AG04449 (cell line): ENCODE measurements at regions of chr17 and their contacts with region 1.

Region 1: GRCh38 chr17:78019367-78019975 is 61.0 kb downstream of the TNRC6C start:
- DNase-seq: no peak
- H3K4me3 ChIP-seq: no peak overlapping the region
- CTCF ChIP-seq: no peak

Region 2: GRCh38 chr17:78040440-78041385 is 21.2 kb after region 1 on chr17:
- CTCF ChIA-PET with region 1: interaction called, 130 read pairs
- POLR2A ChIA-PET with region 1: interaction called, 4 read pairs
- DNase-seq: no peak
- H3K4me3 ChIP-seq: peak overlapping the region; percentile 65
- CTCF ChIP-seq: no peak

Region 3: DNA sequence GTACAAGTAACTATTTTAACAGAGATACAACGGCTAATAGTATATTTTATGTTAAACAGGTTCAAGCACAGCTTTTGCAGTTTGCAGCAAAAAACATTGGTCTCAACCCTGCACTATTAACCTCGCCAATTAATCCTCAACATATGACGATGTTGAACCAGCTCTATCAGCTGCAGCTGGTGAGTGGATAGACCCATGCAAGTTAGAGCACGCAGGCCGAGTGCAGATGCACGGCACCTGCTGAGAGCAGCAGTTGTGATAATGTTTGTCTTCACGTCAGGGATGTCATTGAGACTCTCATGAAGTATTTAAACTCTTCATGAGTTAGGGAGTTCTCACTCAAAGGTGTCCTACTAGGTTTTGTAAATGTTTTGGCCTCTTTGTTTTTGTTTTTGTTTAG is 63.5 kb after region 1 on chr17:
- CTCF ChIA-PET with region 1: interaction called, 37 read pairs
- POLR2A ChIA-PET with region 1: no interaction called
- DNase-seq: no peak
- H3K4me3 ChIP-seq: no peak overlapping the region
- CTCF ChIP-seq: no peak

Region 4: GRCh38 chr17:78112518-78113226 is 93.2 kb after region 1 on chr17:
- CTCF ChIA-PET with region 1: interaction called, 16 read pairs
- POLR2A ChIA-PET with region 1: no interaction called
- DNase-seq: no peak
- H3K4me3 ChIP-seq: no peak overlapping the region
- CTCF ChIP-seq: peak; percentile 99

Region 5: DNA sequence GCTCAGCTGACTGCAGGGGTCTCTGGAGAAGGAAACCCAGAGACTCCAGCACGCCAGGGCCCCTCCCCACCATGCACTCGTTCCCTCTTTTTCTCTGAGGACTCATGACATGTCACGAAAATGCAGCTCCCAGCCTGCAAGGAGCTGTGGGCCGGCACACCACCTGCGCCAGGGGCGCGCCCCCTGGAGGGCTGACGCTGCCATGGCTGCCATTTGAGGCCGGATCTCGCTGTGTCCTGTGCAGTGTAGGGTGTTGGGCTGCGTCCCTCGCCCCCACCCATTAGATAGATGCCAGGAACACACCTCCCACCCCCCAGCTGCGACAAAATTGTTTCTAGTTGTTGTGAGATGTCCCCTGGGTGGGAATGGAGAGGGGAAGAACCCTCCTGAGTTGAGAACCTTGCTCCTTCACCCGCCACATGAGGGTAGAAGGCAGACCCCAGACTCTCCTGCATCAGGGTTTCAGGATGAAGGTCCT is 157.1 kb after region 1 on chr17:
- CTCF ChIA-PET with region 1: interaction called, 37 read pairs
- POLR2A ChIA-PET with region 1: no interaction called
- DNase-seq: no peak
- H3K4me3 ChIP-seq: no peak overlapping the region
- CTCF ChIP-seq: peak; percentile 95

Region 6: DNA sequence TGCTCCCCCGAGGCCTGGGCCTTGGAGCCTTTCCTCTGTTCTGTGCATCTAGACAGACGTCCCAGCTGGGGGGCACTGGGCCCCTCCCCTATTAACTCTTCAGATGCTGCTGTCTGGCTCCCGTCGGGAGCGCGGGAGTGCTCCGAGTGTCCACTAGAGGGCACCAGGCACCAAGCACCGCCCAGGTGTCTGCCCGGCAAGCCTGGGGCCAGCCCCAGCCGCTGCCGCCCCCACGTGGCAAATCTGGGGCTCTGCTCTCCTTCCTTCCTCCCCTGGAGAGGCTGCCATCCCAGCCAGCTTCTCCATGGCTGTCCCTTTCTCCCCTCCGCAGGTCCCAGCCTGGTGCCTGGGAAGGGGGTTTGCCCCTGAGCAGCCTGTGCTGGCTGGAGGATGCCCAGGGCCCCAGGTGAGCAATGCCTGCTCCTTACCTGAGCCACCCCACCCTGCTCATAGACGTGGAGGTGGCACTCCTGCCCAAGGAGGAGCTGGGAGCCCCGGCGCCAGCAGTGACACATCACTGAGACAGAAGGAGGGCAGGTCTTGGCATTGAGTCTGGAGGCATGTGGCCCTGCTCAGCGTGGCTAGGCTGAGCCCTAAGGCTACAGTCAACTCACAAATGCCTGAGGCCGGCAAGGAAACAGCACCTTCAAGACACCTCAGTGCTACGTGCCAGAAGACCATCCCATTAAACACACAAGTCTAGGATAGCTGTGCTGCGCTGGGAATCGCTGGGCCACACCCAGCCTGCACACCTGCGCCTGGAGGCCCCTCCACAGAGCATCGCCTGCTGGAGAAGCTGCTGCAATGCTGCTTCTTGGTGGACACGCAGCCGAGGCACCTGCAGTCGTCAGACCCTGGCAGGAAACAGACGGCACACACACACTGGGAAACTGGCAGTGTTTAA is 231.7 kb after region 1 on chr17:
- CTCF ChIA-PET with region 1: interaction called, 51 read pairs
- POLR2A ChIA-PET with region 1: interaction called, 5 read pairs
- DNase-seq: no peak
- H3K4me3 ChIP-seq: no peak overlapping the region
- CTCF ChIP-seq: peak; percentile 100